B cell (primary cell): ENCODE measurements at regions of chr11 and their contacts with region 1.

Region 1: GRCh38 chr11:43852057-43852636 is 28.5 kb upstream of the ALKBH3 start:
- DNase-seq: peak; percentile 59
- ATAC-seq: peak; percentile 58
- H3K4me3 ChIP-seq: no peak overlapping the region
- H3K4me3 Mint-ChIP-seq: no peak overlapping the region
- H3K27ac ChIP-seq: no peak overlapping the region
- H3K27ac Mint-ChIP-seq: no peak overlapping the region
- H3K4me1 ChIP-seq: no peaks in the 10 kb centered on the region
- H3K4me1 Mint-ChIP-seq: no peaks in the 10 kb centered on the region
- H3K27me3 ChIP-seq: no peaks in the 10 kb centered on the region
- H3K27me3 Mint-ChIP-seq: no peaks in the 10 kb centered on the region
- CTCF ChIP-seq: peak; percentile 86

Region 2: GRCh38 chr11:42770444-42771065 is 1081.6 kb before region 1 on chr11:
- CTCF ChIA-PET with region 1: no interaction called
- POLR2A ChIA-PET with region 1: no interaction called
- intact Hi-C with region 1: loop called (anchors 10 kb)
- DNase-seq: no peak
- ATAC-seq: no peak
- H3K4me3 ChIP-seq: no peak overlapping the region
- H3K4me3 Mint-ChIP-seq: no peak overlapping the region
- H3K27ac ChIP-seq: no peak overlapping the region
- H3K27ac Mint-ChIP-seq: no peak overlapping the region
- H3K4me1 ChIP-seq: no peaks in the 10 kb centered on the region
- H3K4me1 Mint-ChIP-seq: no peaks in the 10 kb centered on the region
- H3K27me3 ChIP-seq: no peaks in the 10 kb centered on the region
- H3K27me3 Mint-ChIP-seq: no peaks in the 10 kb centered on the region
- CTCF ChIP-seq: no peak

Region 3: GRCh38 chr11:43504316-43504950 is 347.7 kb before region 1 on chr11:
- CTCF ChIA-PET with region 1: interaction called, 13 read pairs
- POLR2A ChIA-PET with region 1: no interaction called
- intact Hi-C with region 1: loop called (anchors 10 kb)
- DNase-seq: no peak
- ATAC-seq: no peak
- H3K4me3 ChIP-seq: no peak overlapping the region
- H3K4me3 Mint-ChIP-seq: no peak overlapping the region
- H3K27ac ChIP-seq: no peak overlapping the region
- H3K27ac Mint-ChIP-seq: no peak overlapping the region
- H3K4me1 ChIP-seq: no peaks in the 10 kb centered on the region
- H3K4me1 Mint-ChIP-seq: no peaks in the 10 kb centered on the region
- H3K27me3 ChIP-seq: peaks cover 0 to 5% (median 1%) of the 10 kb centered on the region in 4 experiments
- H3K27me3 Mint-ChIP-seq: peaks cover 16% of the 10 kb centered on the region
- CTCF ChIP-seq: no peak

Region 4: DNA sequence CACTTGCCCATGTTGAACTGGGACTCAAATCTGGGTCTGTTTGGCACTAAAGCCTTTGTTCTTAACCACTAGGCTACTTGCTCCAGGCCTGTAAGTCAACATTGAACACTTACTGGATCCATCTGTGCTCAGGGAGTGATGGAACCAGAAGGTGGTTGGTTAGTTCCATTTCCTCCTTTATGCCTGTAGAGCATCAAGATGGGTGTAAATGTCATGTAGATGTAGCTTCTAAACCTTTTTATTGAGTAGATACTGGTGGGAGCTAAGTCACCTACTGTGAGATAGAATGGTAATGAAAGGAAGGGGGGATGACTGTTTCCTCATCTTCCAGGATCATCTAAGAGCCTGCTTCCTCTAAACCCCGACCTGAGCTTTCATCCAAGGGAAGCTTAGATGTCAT is 10.1 kb before region 1 on chr11:
- CTCF ChIA-PET with region 1: interaction called, 16 read pairs
- POLR2A ChIA-PET with region 1: no interaction called
- intact Hi-C with region 1: no loop called
- DNase-seq: no peak
- ATAC-seq: no peak
- H3K4me3 ChIP-seq: no peak overlapping the region
- H3K4me3 Mint-ChIP-seq: no peak overlapping the region
- H3K27ac ChIP-seq: no peak overlapping the region
- H3K27ac Mint-ChIP-seq: no peak overlapping the region
- H3K4me1 ChIP-seq: no peaks in the 10 kb centered on the region
- H3K4me1 Mint-ChIP-seq: no peaks in the 10 kb centered on the region
- H3K27me3 ChIP-seq: no peaks in the 10 kb centered on the region
- H3K27me3 Mint-ChIP-seq: no peaks in the 10 kb centered on the region
- CTCF ChIP-seq: no peak

Region 5: DNA sequence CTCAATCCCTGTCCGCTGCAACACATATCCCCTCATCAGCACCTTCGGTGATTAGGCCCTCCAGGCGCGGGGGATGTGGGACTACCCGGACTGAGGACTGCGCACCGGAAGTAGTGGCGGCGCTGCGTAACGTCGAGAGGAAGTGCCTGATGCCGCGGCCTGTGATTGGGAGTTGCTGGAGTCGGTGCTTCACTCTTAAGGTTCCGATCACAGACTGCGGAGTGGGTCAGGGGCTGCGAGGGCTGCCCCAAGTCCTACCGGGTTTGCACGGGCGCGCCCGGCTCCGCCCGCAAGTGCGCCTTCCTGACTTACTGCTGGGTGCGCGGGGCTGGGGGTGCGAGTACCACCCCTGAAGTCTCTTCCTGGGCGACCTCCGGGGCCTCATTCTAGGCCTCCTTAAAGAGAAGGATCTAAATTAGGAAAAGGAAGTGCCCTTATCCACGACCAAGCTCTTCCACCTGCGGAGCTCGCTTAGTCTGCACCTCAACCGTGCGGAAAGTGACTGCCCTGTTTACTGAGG is 28.6 kb after region 1 on chr11 and contains the start of gene ALKBH3:
- CTCF ChIA-PET with region 1: no interaction called
- POLR2A ChIA-PET with region 1: no interaction called
- intact Hi-C with region 1: no loop called
- DNase-seq: peak; percentile 93
- ATAC-seq: peak; percentile 99
- H3K4me3 ChIP-seq: peak within 1 kb of the TSS; percentile 54 to 96 (median 82)
- H3K4me3 Mint-ChIP-seq: peak within 1 kb of the TSS; percentile 95
- H3K27ac ChIP-seq: peak within 1 kb of the TSS; percentile 3 to 62
- H3K27ac Mint-ChIP-seq: peak within 1 kb of the TSS; percentile 82
- H3K4me1 ChIP-seq: peaks cover 14 to 15% of the 10 kb centered on the region in 2 donors
- H3K4me1 Mint-ChIP-seq: peaks cover 19% of the 10 kb centered on the region
- H3K27me3 ChIP-seq: peaks cover 0 to 26% (median 8%) of the 10 kb centered on the region in 4 experiments
- H3K27me3 Mint-ChIP-seq: peaks cover 26% of the 10 kb centered on the region
- CTCF ChIP-seq: no peak
- total RNA-seq, gene ALKBH3: 26.7 and 27.3 TPM in 2 replicates

Region 6: GRCh38 chr11:44143943-44144909 is 292.1 kb after region 1 on chr11:
- CTCF ChIA-PET with region 1: no interaction called
- POLR2A ChIA-PET with region 1: no interaction called
- intact Hi-C with region 1: no loop called
- DNase-seq: no peak
- ATAC-seq: no peak
- H3K4me3 ChIP-seq: no peak overlapping the region
- H3K4me3 Mint-ChIP-seq: no peak overlapping the region
- H3K27ac ChIP-seq: no peak overlapping the region
- H3K27ac Mint-ChIP-seq: no peak overlapping the region
- H3K4me1 ChIP-seq: no peaks in the 10 kb centered on the region
- H3K4me1 Mint-ChIP-seq: no peaks in the 10 kb centered on the region
- H3K27me3 ChIP-seq: no peaks in the 10 kb centered on the region
- H3K27me3 Mint-ChIP-seq: no peaks in the 10 kb centered on the region
- CTCF ChIP-seq: no peak